CD8-positive, alpha-beta T cell (primary cell): ENCODE measurements at regions of chr13 and their contacts with region 1.

Region 1: GRCh38 chr13:110116072-110116487 is 190.9 kb downstream of the COL4A1 start:
- DNase-seq: peak in 7 of 9 experiments; percentile 11 to 58 (median 32)
- ATAC-seq: no peak
- H3K4me3 ChIP-seq: no peak overlapping the region
- H3K4me3 Mint-ChIP-seq: no peak overlapping the region
- H3K27ac ChIP-seq: no peak overlapping the region
- H3K27ac Mint-ChIP-seq: no peak overlapping the region
- H3K4me1 ChIP-seq: no peaks in the 10 kb centered on the region
- H3K4me1 Mint-ChIP-seq: peaks cover 2% of the 10 kb centered on the region
- H3K27me3 ChIP-seq: no peaks in the 10 kb centered on the region
- H3K27me3 Mint-ChIP-seq: peaks cover 27% of the 10 kb centered on the region
- CTCF ChIP-seq: peak; percentile 46

Region 2: DNA sequence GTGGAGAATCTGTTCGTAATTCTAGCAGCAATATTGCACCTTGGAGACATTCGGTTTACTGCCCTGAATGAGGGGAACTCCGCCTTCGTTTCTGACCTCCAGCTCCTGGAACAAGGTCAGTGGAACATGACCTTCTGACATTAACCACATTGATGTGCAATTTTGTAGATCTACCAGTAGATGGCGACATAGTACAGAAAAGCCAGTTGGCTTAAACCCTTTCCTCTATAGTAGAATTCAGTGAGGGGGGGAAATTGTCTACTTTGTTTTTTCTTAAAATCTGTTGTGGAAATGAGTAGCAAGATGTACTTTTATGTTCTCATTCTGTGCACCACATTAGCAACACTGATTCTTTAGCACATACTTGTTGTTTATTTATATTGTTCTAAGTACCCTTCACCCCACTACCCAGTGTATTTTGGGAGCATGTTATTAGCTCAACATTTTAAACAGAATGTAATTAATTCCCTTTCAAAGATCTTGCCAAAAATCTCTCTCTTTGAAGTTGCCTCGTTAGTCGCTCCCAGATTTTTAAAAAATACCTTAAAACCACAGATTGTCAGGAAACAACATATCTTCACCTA is 1154.4 kb before region 1 on chr13:
- CTCF ChIA-PET with region 1: no interaction called
- POLR2A ChIA-PET with region 1: no interaction called
- intact Hi-C with region 1: loop called in 1 of 2 experiments (anchors 1 kb)
- DNase-seq: peak in 5 of 9 experiments; percentile 5 to 57 (median 16)
- ATAC-seq: peak; percentile 52
- H3K4me3 ChIP-seq: no peak overlapping the region
- H3K4me3 Mint-ChIP-seq: no peak overlapping the region
- H3K27ac ChIP-seq: no peak overlapping the region
- H3K27ac Mint-ChIP-seq: no peak overlapping the region
- H3K4me1 ChIP-seq: no peaks in the 10 kb centered on the region
- H3K4me1 Mint-ChIP-seq: no peaks in the 10 kb centered on the region
- H3K27me3 ChIP-seq: no peaks in the 10 kb centered on the region
- H3K27me3 Mint-ChIP-seq: peaks cover 7% of the 10 kb centered on the region
- CTCF ChIP-seq: peak; percentile 97

Region 3: GRCh38 chr13:109145631-109146030 is 970.4 kb before region 1 on chr13:
- CTCF ChIA-PET with region 1: no interaction called
- POLR2A ChIA-PET with region 1: no interaction called
- intact Hi-C with region 1: loop called in 1 of 2 experiments (anchors 10 kb)
- DNase-seq: peak in 2 of 9 experiments; percentile 7 to 30
- ATAC-seq: no peak
- H3K4me3 ChIP-seq: no peak overlapping the region
- H3K4me3 Mint-ChIP-seq: no peak overlapping the region
- H3K27ac ChIP-seq: no peak overlapping the region
- H3K27ac Mint-ChIP-seq: no peak overlapping the region
- H3K4me1 ChIP-seq: no peaks in the 10 kb centered on the region
- H3K4me1 Mint-ChIP-seq: no peaks in the 10 kb centered on the region
- H3K27me3 ChIP-seq: peaks cover 0 to 3% of the 10 kb centered on the region in 2 experiments
- H3K27me3 Mint-ChIP-seq: peaks cover 28% of the 10 kb centered on the region
- CTCF ChIP-seq: no peak

Region 4: GRCh38 chr13:110274687-110275086 is 158.6 kb after region 1 on chr13:
- CTCF ChIA-PET with region 1: no interaction called
- POLR2A ChIA-PET with region 1: no interaction called
- intact Hi-C with region 1: no loop called
- DNase-seq: no peak
- ATAC-seq: no peak
- H3K4me3 ChIP-seq: no peak overlapping the region
- H3K4me3 Mint-ChIP-seq: no peak overlapping the region
- H3K27ac ChIP-seq: no peak overlapping the region
- H3K27ac Mint-ChIP-seq: no peak overlapping the region
- H3K4me1 ChIP-seq: no peaks in the 10 kb centered on the region
- H3K4me1 Mint-ChIP-seq: no peaks in the 10 kb centered on the region
- H3K27me3 ChIP-seq: no peaks in the 10 kb centered on the region
- H3K27me3 Mint-ChIP-seq: peaks cover 4% of the 10 kb centered on the region
- CTCF ChIP-seq: no peak